PC-3 (cell line): ENCODE measurements at regions of chr3 and their contacts with region 1.

Region 1: GRCh38 chr3:85576091-85576690 is 617.4 kb downstream of the CADM2 start:
- DNase-seq: peak; percentile 85
- ATAC-seq: 0 out of 2 replicates have a peak, but pooled peaks have one; percentile 56
- H3K4me3 ChIP-seq: no peak overlapping the region
- H3K27ac ChIP-seq: no peak overlapping the region
- H3K4me1 ChIP-seq: no peaks in the 10 kb centered on the region
- H3K27me3 ChIP-seq: no peaks in the 10 kb centered on the region
- CTCF ChIP-seq: peak; percentile 87

Region 2: GRCh38 chr3:85116736-85117135 is 459.5 kb before region 1 on chr3:
- CTCF ChIA-PET with region 1: no interaction called
- POLR2A ChIA-PET with region 1: no interaction called
- intact Hi-C with region 1: loop called (anchors 5 kb)
- DNase-seq: no peak
- ATAC-seq: no peak
- H3K4me3 ChIP-seq: no peak overlapping the region
- H3K27ac ChIP-seq: no peak overlapping the region
- H3K4me1 ChIP-seq: no peaks in the 10 kb centered on the region
- H3K27me3 ChIP-seq: no peaks in the 10 kb centered on the region
- CTCF ChIP-seq: no peak

Region 3: DNA sequence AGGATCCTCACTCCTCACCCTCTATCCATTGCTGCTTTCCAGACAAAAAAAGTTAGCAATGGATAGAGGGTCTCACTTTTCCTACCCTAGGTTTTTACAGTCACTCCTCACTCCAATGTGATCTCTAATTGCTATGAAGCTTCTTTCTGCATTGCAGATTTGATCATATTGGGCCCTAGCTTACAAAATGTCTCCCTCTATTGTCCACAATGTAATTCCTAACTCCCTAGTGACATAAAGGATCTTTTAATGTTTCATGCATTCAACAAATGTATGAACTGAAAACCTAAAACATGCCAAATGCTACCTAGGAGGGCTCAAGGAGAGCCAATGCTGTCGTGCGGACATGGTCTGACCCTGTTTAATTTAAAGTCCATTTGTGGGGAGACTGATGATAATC is 382.6 kb before region 1 on chr3:
- CTCF ChIA-PET with region 1: no interaction called
- POLR2A ChIA-PET with region 1: no interaction called
- intact Hi-C with region 1: loop called (anchors 5 kb)
- DNase-seq: peak; percentile 52
- ATAC-seq: peak; percentile 55; the same call in 1 of the 2 replicates
- H3K4me3 ChIP-seq: no peak overlapping the region
- H3K27ac ChIP-seq: no peak overlapping the region
- H3K4me1 ChIP-seq: no peaks in the 10 kb centered on the region
- H3K27me3 ChIP-seq: no peaks in the 10 kb centered on the region
- CTCF ChIP-seq: peak; percentile 68

Region 4: DNA sequence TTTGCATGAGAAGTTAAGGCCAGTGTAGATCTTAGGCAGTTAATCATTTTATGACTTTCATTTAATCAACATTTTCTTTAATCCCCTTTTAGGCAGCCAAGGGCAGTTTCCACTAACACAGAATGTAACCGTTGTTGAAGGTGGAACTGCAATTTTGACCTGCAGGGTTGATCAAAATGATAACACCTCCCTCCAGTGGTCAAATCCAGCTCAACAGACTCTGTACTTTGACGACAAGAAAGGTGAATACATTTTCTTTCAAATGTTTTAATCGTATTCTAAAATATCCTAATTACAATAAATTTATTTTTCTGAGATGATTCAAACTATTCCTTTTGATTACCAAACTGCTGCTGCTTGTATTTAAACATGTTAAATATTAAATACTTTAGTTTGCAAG is 225.8 kb after region 1 on chr3:
- CTCF ChIA-PET with region 1: interaction called, 10 read pairs
- POLR2A ChIA-PET with region 1: no interaction called
- intact Hi-C with region 1: loop called (anchors 1 kb)
- DNase-seq: peak; percentile 80
- ATAC-seq: peak; percentile 95
- H3K4me3 ChIP-seq: no peak overlapping the region
- H3K27ac ChIP-seq: no peak overlapping the region
- H3K4me1 ChIP-seq: no peaks in the 10 kb centered on the region; the same call in 1 of the 2 replicates
- H3K27me3 ChIP-seq: no peaks in the 10 kb centered on the region
- CTCF ChIP-seq: peak; percentile 91